K562 (cell line): ENCODE measurements at regions of chr12 and their contacts with region 1.

Region 1: GRCh38 chr12:97375310-97375709 is 87.3 kb upstream of the RMST start:
- DNase-seq: no peak
- ATAC-seq: no peak
- H3K4me3 ChIP-seq: no peak overlapping the region
- H3K27ac ChIP-seq: no peak overlapping the region
- H3K4me1 ChIP-seq: no peaks in the 10 kb centered on the region
- H3K27me3 ChIP-seq: no peaks in the 10 kb centered on the region
- CTCF ChIP-seq: no peak
- EP300 ChIP-seq: no peak
- POLR2A ChIP-seq: no peak
- RAD21 ChIP-seq: no peak

Region 2: GRCh38 chr12:97308576-97309198 is 66.6 kb before region 1 on chr12:
- CTCF ChIA-PET with region 1: no interaction called
- POLR2A ChIA-PET with region 1: no interaction called
- in situ Hi-C with region 1: no loop called
- intact Hi-C with region 1: loop called (anchors 10 kb)
- DNase-seq: peak; percentile 8 to 50 (median 22)
- ATAC-seq: no peak
- H3K4me3 ChIP-seq: no peak overlapping the region
- H3K27ac ChIP-seq: no peak overlapping the region
- H3K4me1 ChIP-seq: no peaks in the 10 kb centered on the region
- H3K27me3 ChIP-seq: no peaks in the 10 kb centered on the region
- CTCF ChIP-seq: peak; percentile 11 to 51 (median 36); a peak in 3 of 6 replicates
- EP300 ChIP-seq: no peak
- POLR2A ChIP-seq: no peak
- RAD21 ChIP-seq: peak; percentile 49 to 53